Gastrocnemius medialis (tissue), 4 donors: ENCODE measurements at regions of chr10 and their contacts with region 1.

Region 1: DNA sequence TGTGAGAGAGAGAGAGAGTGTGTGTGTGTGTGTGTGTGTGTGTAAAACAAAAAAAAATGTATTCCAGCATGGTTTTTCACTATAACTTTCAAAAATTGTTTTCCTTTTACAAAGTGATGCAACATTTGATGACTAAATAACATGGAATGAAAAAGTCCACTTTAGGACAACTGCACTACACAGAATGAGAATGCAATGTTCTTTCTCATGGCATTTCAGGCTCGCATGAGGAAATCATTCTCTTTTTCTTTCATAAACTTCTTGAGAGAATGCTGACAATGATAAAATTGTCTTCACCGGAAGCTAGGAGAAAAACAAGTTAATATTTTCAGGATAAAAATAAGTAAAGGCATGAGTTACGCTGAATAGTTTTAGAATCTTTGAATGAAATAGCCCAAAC is 53.7 kb downstream of the SLC16A12 start:
- DNase-seq: no peak
- ATAC-seq: peak; percentile 80 to 81
- H3K4me3 ChIP-seq: no peak overlapping the region
- H3K27ac ChIP-seq: peak overlapping the region; percentile 49 to 71 (median 64)
- H3K4me1 ChIP-seq: peaks cover 21 to 31% of the 10 kb centered on the region in 2 donors
- H3K27me3 ChIP-seq: no peaks in the 10 kb centered on the region
- CTCF ChIP-seq: no peak
- POLR2A ChIP-seq: no peak

Region 2: DNA sequence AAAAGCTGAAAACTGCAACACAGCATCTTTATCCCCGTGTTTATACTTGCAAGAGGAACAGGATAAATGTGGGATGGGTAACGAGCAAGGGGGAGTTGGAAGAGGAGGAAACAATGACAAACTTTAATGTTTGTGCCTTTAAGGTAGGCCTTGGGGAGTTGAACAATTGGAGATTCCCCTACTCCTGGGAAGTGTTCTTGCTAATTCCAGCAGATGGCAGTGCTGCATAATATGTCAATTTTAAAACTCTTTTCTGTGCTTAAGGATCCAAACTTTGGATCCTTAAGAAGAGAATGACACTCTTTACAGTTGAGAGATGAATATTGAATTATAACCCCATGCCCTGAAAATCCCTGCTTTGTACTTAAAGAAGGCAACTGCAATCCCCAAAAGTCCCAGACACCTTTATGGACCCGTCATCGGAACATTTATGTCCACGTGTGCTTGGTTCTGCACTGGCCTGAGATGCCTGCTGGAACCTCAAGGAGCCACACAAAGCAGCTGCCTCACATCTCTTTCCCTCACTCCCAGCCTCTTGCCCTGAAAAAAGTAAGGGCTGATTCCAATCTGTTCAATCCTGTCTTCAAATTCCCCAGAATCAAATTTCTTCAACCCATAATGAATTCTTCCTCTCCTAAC is 55.3 kb before region 1 on chr10:
- in situ Hi-C with region 1: no loop called
- intact Hi-C with region 1: loop called (anchors 5 kb)
- DNase-seq: no peak
- ATAC-seq: peak; percentile 83 to 87
- H3K4me3 ChIP-seq: no peak overlapping the region
- H3K27ac ChIP-seq: no peak overlapping the region
- H3K4me1 ChIP-seq: peaks cover 7 to 29% of the 10 kb centered on the region in 2 donors
- H3K27me3 ChIP-seq: no peaks in the 10 kb centered on the region
- CTCF ChIP-seq: peak; percentile 75 to 87 (median 83)
- POLR2A ChIP-seq: no peak

Region 3: DNA sequence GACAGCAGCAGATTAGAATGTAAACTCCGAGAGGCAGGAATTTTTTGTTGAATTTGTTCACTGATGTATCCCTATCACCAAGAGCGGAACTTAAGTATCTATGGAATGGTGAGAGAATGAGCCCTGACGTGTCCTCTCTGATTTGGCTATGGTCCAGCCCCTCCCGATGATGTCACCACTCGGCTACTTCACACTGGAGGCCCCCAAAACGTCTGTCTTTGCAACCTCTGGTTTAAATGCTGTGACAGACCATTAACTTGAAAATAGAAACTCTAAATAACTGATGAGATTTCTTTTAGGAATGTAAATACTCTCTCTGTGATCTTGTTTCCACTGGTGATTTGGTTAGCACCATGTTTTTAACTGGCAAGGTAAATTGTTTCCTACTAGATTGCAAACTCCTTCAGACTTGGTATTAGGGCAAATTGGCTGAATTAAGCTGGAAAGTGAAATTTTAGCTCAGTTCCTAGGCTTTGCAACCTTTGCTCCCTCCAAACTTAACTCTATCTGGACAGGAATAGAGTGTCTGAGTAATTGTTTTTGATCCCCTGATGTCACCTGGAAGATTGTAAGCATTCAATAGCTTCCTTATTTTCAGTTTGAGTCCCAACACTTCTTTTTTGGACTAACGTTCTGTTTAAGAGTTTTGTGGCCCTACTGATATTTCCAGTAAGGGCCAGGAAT is 34.6 kb after region 1 on chr10:
- in situ Hi-C with region 1: no loop called
- intact Hi-C with region 1: loop called (anchors 5 kb)
- DNase-seq: peak in 1 of 2 donors; percentile 36
- ATAC-seq: peak in 1 of 2 donors; percentile 20
- H3K4me3 ChIP-seq: no peak overlapping the region
- H3K27ac ChIP-seq: peak overlapping the region; percentile 45 to 72 (median 62)
- H3K4me1 ChIP-seq: peaks cover 8 to 14% of the 10 kb centered on the region in 2 donors
- H3K27me3 ChIP-seq: no peaks in the 10 kb centered on the region
- CTCF ChIP-seq: no peak
- POLR2A ChIP-seq: no peak